Endothelial cell of umbilical vein (primary cell): ENCODE measurements at regions of chr1 and their contacts with region 1.

Region 1: DNA sequence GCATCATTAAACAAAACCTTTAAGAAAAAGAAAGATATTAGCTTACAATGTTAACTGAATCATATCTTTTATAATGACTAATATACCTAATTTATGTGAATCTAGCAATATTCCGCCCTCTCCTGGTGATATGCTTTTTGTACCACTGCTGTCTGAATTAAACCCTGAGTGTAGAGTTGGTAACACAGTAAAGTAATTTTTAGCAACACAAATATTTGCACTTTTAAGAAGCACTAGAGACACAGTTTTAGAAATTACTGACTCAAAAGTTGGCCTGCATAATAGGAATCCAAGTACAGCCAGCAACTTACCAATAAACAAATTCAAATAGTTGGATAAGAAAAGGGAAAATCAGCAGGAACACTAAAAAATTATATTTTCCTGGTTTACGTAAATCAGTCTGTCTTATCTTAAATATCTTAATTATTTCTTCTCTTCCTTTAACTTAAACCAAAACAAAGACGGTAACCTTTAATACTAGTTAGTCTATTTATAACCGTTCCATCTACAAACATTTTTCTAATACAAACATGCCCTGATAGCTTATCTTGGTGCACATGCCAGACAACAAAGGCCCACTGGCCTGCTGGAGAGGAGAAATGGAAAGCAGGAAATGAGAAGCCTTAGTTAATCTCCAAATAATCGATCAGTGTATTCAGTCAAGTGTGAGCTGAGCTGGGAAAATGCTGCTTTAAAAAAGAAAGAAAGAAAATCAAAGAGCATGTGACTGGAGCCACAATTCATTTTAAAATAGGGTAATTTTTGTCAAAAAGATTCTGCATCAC is 246.0 kb downstream of the RERE start:
- DNase-seq: peak; percentile 94
- H3K4me3 ChIP-seq: peak overlapping the region in 1 of 3 experiments; percentile 19
- H3K27ac ChIP-seq: peak overlapping the region; percentile 93
- H3K4me1 ChIP-seq: peaks cover 27% of the 10 kb centered on the region
- H3K27me3 ChIP-seq: no peaks in the 10 kb centered on the region
- CTCF ChIP-seq: peak; percentile 28 to 61
- POLR2A ChIP-seq: peak; percentile 31

Region 2: GRCh38 chr1:8218361-8219092 is 352.9 kb before region 1 on chr1:
- CTCF ChIA-PET with region 1: no interaction called
- POLR2A ChIA-PET with region 1: no interaction called
- dilution Hi-C with region 1: no loop called
- intact Hi-C with region 1: no loop called
- DNase-seq: no peak
- H3K4me3 ChIP-seq: no peak overlapping the region
- H3K27ac ChIP-seq: no peak overlapping the region
- H3K4me1 ChIP-seq: peaks cover 9% of the 10 kb centered on the region
- H3K27me3 ChIP-seq: no peaks in the 10 kb centered on the region
- CTCF ChIP-seq: no peak
- POLR2A ChIP-seq: no peak

Region 3: GRCh38 chr1:8374812-8375211 is 196.6 kb before region 1 on chr1:
- CTCF ChIA-PET with region 1: interaction called, 4 read pairs
- POLR2A ChIA-PET with region 1: no interaction called
- dilution Hi-C with region 1: no loop called
- intact Hi-C with region 1: loop called (anchors 1 kb)
- DNase-seq: peak; percentile 55
- H3K4me3 ChIP-seq: no peak overlapping the region
- H3K27ac ChIP-seq: no peak overlapping the region
- H3K4me1 ChIP-seq: peaks cover 24% of the 10 kb centered on the region
- H3K27me3 ChIP-seq: no peaks in the 10 kb centered on the region
- CTCF ChIP-seq: peak; percentile 28 to 47
- POLR2A ChIP-seq: no peak

Region 4: DNA sequence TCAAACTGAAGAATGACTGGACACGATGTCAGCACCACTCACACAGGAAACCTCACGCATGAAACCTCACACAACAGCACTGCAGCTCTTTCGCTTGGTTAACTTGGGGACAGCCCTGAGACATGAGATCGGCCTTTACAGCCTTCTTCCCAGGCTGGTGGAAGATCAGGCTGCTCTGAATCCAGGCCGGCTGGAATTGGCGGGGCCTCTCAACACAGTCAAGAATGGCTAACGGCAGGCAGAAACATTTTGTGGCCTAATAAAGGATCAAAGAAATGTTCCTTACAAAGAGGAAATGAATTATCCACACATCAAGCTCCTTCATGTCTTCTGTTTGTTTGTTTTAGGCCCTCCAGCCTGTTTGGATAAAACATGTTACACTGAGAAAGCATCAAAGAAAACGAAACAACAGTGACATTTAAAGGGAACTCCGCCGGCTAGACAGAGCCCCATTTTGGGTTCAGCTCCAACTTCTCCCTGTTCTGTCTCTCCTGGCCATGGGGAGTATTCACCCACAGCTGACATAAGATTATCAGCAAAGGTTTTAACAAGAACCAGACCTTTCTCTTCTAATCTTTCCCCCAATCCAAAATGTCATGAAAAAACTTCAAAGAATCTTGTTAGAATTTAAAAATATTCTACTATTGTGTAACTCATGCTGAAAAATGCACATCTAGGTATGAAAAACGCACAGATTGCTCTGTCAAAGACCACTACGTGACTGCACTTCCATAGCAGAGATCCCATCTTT is 122.3 kb before region 1 on chr1:
- CTCF ChIA-PET with region 1: no interaction called
- POLR2A ChIA-PET with region 1: no interaction called
- dilution Hi-C with region 1: no loop called
- intact Hi-C with region 1: no loop called
- DNase-seq: no peak
- H3K4me3 ChIP-seq: no peak overlapping the region
- H3K27ac ChIP-seq: no peak overlapping the region
- H3K4me1 ChIP-seq: no peaks in the 10 kb centered on the region
- H3K27me3 ChIP-seq: no peaks in the 10 kb centered on the region
- CTCF ChIP-seq: no peak
- POLR2A ChIP-seq: no peak

Region 5: GRCh38 chr1:8554956-8555534 is 16.3 kb before region 1 on chr1:
- CTCF ChIA-PET with region 1: interaction called, 12 read pairs
- POLR2A ChIA-PET with region 1: no interaction called
- dilution Hi-C with region 1: no loop called
- intact Hi-C with region 1: no loop called
- DNase-seq: peak; percentile 53
- H3K4me3 ChIP-seq: no peak overlapping the region
- H3K27ac ChIP-seq: no peak overlapping the region
- H3K4me1 ChIP-seq: peaks cover 3% of the 10 kb centered on the region
- H3K27me3 ChIP-seq: no peaks in the 10 kb centered on the region
- CTCF ChIP-seq: no peak
- POLR2A ChIP-seq: no peak

Region 6: GRCh38 chr1:8649027-8649426 is 77.6 kb after region 1 on chr1:
- CTCF ChIA-PET with region 1: interaction called, 16 read pairs
- POLR2A ChIA-PET with region 1: no interaction called
- dilution Hi-C with region 1: no loop called
- intact Hi-C with region 1: loop called (anchors 1 kb)
- DNase-seq: peak; percentile 85
- H3K4me3 ChIP-seq: no peak overlapping the region
- H3K27ac ChIP-seq: peak overlapping the region; percentile 33
- H3K4me1 ChIP-seq: peaks cover 35% of the 10 kb centered on the region
- H3K27me3 ChIP-seq: no peaks in the 10 kb centered on the region
- CTCF ChIP-seq: no peak
- POLR2A ChIP-seq: no peak

Region 7: GRCh38 chr1:8727809-8728213 is 156.4 kb after region 1 on chr1:
- CTCF ChIA-PET with region 1: interaction called, 32 read pairs
- POLR2A ChIA-PET with region 1: no interaction called
- dilution Hi-C with region 1: no loop called
- intact Hi-C with region 1: no loop called
- DNase-seq: no peak
- H3K4me3 ChIP-seq: no peak overlapping the region
- H3K27ac ChIP-seq: no peak overlapping the region
- H3K4me1 ChIP-seq: no peaks in the 10 kb centered on the region
- H3K27me3 ChIP-seq: no peaks in the 10 kb centered on the region
- CTCF ChIP-seq: no peak
- POLR2A ChIP-seq: no peak

Region 8: GRCh38 chr1:8858888-8859706 is 287.7 kb after region 1 on chr1:
- CTCF ChIA-PET with region 1: no interaction called
- POLR2A ChIA-PET with region 1: no interaction called
- dilution Hi-C with region 1: no loop called
- intact Hi-C with region 1: loop called (anchors 5 kb)
- DNase-seq: peak; percentile 83
- H3K4me3 ChIP-seq: no peak overlapping the region
- H3K27ac ChIP-seq: peak overlapping the region; percentile 80
- H3K4me1 ChIP-seq: peaks cover 36% of the 10 kb centered on the region
- H3K27me3 ChIP-seq: no peaks in the 10 kb centered on the region
- CTCF ChIP-seq: peak; percentile 65
- POLR2A ChIP-seq: peak; percentile 33

Region 9: DNA sequence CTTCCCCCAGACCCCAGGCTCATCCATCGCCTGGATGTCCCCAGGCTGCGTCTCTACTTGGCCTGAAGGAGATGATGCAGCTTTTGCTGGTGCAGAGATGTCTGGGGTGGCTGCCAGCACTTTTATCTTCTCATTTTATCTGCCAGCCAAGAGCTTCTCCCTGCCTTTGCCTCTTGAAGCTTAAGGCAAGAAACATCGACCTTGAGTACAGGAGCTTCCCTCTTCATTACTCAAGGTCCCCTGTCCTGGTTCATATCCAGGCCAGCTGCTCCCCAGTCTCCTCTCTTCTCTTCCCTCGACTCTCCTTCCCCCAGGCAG is 654.0 kb after region 1 on chr1:
- CTCF ChIA-PET with region 1: no interaction called
- POLR2A ChIA-PET with region 1: no interaction called
- dilution Hi-C with region 1: no loop called
- intact Hi-C with region 1: no loop called
- DNase-seq: no peak
- H3K4me3 ChIP-seq: no peak overlapping the region
- H3K27ac ChIP-seq: no peak overlapping the region
- H3K4me1 ChIP-seq: no peaks in the 10 kb centered on the region
- H3K27me3 ChIP-seq: peaks cover 0 to 4% of the 10 kb centered on the region in 2 experiments
- CTCF ChIP-seq: no peak
- POLR2A ChIP-seq: no peak

Region 10: DNA sequence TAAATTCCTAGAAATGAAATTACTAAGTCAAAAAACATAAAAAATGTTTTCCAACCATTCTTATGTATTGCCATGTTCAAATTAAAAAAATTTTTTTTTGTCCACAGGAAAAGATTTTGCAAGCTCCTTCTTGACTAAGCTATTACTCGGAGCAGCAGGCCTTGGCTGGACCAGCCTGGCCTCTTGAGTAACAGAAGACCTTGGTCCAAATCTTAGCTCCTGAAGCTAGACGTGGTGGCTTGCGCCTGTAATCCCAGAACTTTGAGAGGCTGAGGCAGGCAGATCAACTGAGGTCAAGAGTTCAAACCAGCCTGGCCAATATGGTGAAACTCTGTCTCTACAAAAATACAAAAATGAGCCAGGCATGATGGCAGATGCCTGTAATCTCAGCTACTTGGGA is 1174.8 kb after region 1 on chr1:
- CTCF ChIA-PET with region 1: no interaction called
- POLR2A ChIA-PET with region 1: no interaction called
- dilution Hi-C with region 1: no loop called
- intact Hi-C with region 1: no loop called
- DNase-seq: no peak
- H3K4me3 ChIP-seq: no peak overlapping the region
- H3K27ac ChIP-seq: no peak overlapping the region
- H3K4me1 ChIP-seq: no peaks in the 10 kb centered on the region
- H3K27me3 ChIP-seq: no peaks in the 10 kb centered on the region
- CTCF ChIP-seq: no peak
- POLR2A ChIP-seq: no peak